ENCODE measurements at regions of chr15 and their contacts with region 1.

Region 1: DNA sequence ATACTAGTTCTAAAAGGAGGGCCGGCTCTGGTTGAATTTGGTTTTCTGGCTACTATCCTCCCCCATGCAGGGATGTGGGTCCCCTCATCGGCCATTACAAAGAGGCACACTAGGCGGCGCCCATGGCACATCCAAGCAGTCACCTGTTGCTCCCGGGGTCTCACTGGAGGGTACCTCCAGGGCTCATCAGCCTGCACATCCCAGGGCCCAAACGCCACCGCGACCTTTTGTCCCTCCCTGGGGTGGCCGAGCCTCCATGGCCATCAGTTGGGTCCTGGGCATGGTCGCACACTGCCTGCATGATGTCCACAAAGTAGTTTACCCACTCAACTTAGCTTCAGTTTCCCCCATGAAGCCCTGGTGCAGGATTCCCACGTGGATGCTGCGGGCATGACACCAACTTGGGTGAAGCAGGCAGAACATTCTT is 28.3 kb downstream of the IDH3A start:
- DNase-seq: peak in 3 of 7 donors; percentile 36 to 51 (median 40)
- H3K4me3 ChIP-seq: no peak overlapping the region
- H3K27ac ChIP-seq: no peak overlapping the region
- H3K4me1 ChIP-seq: peaks cover 5 to 8% of the 10 kb centered on the region in 2 donors
- H3K27me3 ChIP-seq: no peaks in the 10 kb centered on the region
- CTCF ChIP-seq: peak; percentile 26 to 66 (median 56)
- POLR2A ChIP-seq: no peak

Region 2: DNA sequence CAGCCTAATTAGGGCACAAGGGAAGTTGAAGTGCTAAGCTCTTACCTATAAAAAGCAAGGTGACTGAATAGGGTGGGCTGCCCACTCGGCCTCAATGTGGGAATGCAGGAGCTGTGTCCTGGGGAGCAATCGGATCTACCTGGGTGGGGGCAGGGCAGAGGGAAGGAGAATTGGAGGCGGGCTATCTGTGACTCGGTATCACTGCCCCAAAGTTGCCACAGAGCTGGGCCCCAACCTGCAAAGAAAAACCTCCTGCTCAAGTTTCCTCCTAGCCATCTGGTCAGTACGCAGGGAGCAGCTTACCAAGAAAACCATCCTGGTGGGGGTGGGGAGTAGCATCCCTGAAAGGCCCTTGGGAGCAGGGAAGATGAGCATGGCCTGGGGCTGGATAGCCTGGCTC is 56.9 kb before region 1 on chr15:
- intact Hi-C with region 1: no loop called
- DNase-seq: no peak
- H3K4me3 ChIP-seq: no peak overlapping the region
- H3K27ac ChIP-seq: no peak overlapping the region
- H3K4me1 ChIP-seq: no peaks in the 10 kb centered on the region
- H3K27me3 ChIP-seq: no peaks in the 10 kb centered on the region
- CTCF ChIP-seq: no peak
- POLR2A ChIP-seq: no peak

Region 3: DNA sequence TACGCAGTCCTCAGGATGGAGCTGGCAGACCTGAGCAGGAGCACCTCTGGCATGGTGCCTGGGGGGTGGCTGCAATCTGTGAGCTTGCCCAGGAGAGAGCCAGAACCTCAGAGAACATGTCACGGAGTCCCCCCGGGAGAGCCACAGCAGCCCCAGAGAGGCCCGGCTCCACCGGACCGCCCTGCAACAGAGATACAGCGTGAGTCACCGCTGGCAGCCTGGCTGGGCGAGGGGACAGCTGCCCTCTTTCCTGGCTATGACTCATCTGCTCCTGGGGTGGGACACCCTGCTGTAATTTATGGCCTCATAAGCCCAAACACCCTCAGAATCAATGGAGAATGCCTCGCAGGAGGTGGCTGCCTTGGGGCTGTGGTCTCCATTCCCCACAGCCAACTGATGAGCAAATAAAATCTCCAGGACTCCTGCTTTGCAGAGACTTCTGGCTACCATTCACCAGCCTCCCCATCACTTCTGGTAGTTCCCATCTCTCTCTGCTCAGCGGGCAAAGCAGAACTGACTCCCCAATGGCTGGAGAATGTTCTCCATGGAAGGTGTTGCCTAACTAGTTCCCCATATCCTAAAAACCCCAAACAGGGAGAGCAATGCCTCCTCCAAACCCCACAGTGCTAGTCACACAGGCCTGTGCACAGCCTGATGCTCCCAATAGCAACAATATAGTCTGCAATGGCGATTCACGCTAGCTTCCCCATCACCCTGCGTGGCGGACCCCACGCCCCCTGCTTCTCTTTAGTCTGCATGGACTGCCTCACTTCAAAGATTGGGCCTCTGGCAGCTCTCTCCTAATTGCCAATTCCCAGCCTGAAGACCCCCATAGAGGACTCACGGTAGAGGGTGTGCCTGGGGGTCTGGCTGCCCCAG is 35.3 kb after region 1 on chr15:
- intact Hi-C with region 1: no loop called
- DNase-seq: peak; percentile 84 to 94 (median 90)
- H3K4me3 ChIP-seq: no peak overlapping the region
- H3K27ac ChIP-seq: peak overlapping the region in 2 of 5 donors; percentile 37 to 38
- H3K4me1 ChIP-seq: peaks cover 32% of the 10 kb centered on the region in 2 donors
- H3K27me3 ChIP-seq: no peaks in the 10 kb centered on the region
- CTCF ChIP-seq: no peak
- POLR2A ChIP-seq: no peak

Region 4: DNA sequence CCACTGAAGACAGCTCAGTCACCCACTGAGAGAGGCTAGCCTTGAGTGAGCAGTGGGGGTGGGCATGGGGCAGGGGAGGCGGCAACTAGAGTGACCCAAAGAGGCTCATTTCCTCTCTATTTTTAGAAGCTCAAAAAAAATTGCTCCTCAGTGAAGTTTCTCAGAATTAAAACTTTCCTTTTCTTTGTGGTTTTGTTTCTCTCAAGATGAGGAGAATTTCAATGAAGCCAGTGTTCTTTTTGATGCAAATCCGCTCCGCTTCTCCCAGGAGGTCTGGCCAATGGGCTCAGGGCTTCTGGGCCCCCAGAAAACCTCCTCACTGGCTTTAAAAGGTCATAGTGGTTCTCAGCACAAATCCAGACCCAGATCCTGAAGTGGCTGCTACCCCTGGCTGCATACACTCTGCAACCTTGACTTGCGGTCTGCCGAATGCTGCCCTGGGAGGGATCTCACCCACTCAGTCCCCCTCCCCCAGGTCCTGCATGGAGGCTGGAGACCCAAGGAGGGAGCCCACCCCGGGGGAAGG is 57.1 kb after region 1 on chr15 and contains the start of gene ACSBG1:
- intact Hi-C with region 1: loop called in 1 of 2 experiments (anchors 10 kb)
- DNase-seq: no peak
- H3K4me3 ChIP-seq: no peak within 1 kb of the TSS
- H3K27ac ChIP-seq: no peak within 1 kb of the TSS
- H3K4me1 ChIP-seq: peaks cover 5 to 7% of the 10 kb centered on the region in 2 donors
- H3K27me3 ChIP-seq: no peaks in the 10 kb centered on the region
- CTCF ChIP-seq: no peak
- POLR2A ChIP-seq: no peak
- total RNA-seq, gene ACSBG1: 1.9 to 42.3 (median 6.7) TPM

Region 5: GRCh38 chr15:78241007-78241406 is 63.5 kb after region 1 on chr15:
- intact Hi-C with region 1: loop called (anchors 5 to 10 kb)
- DNase-seq: peak; percentile 83 to 95 (median 91)
- H3K4me3 ChIP-seq: no peak overlapping the region
- H3K27ac ChIP-seq: no peak overlapping the region
- H3K4me1 ChIP-seq: peaks cover 5 to 7% of the 10 kb centered on the region in 2 donors
- H3K27me3 ChIP-seq: no peaks in the 10 kb centered on the region
- CTCF ChIP-seq: peak; percentile 77 to 95 (median 88)
- POLR2A ChIP-seq: no peak

Region 6: GRCh38 chr15:78299101-78299930 is 121.9 kb after region 1 on chr15 and contains the start of gene SKIC8:
- intact Hi-C with region 1: no loop called
- DNase-seq: peak; percentile 90 to 96 (median 94)
- H3K4me3 ChIP-seq: peak within 1 kb of the TSS; percentile 35 to 95 (median 82)
- H3K27ac ChIP-seq: peak within 1 kb of the TSS; percentile 19 to 88 (median 76)
- H3K4me1 ChIP-seq: peaks cover 0 to 19% of the 10 kb centered on the region in 2 donors
- H3K27me3 ChIP-seq: no peaks in the 10 kb centered on the region
- CTCF ChIP-seq: no peak
- POLR2A ChIP-seq: peak; percentile 74 to 81
- total RNA-seq, gene SKIC8: 45.9 to 137 (median 62.0) TPM

Region 7: GRCh38 chr15:78506971-78507830 is 329.7 kb after region 1 on chr15 and contains the start of gene HYKK:
- intact Hi-C with region 1: no loop called
- DNase-seq: peak; percentile 91 to 98 (median 96)
- H3K4me3 ChIP-seq: peak within 1 kb of the TSS in 3 of 4 donors; percentile 13 to 83 (median 65)
- H3K27ac ChIP-seq: peak within 1 kb of the TSS in 3 of 5 donors; percentile 52 to 68 (median 53)
- H3K4me1 ChIP-seq: peaks cover 0 to 13% of the 10 kb centered on the region in 2 donors
- H3K27me3 ChIP-seq: no peaks in the 10 kb centered on the region
- CTCF ChIP-seq: peak in 4 of 6 experiments; percentile 18 to 41 (median 26)
- POLR2A ChIP-seq: peak in 1 of 2 donors; percentile 58
- total RNA-seq, gene HYKK: 3.2 to 17.1 (median 7.5) TPM